OCI-LY7 (cell line): ENCODE measurements at regions of chr18 and their contacts with region 1.

Region 1: DNA sequence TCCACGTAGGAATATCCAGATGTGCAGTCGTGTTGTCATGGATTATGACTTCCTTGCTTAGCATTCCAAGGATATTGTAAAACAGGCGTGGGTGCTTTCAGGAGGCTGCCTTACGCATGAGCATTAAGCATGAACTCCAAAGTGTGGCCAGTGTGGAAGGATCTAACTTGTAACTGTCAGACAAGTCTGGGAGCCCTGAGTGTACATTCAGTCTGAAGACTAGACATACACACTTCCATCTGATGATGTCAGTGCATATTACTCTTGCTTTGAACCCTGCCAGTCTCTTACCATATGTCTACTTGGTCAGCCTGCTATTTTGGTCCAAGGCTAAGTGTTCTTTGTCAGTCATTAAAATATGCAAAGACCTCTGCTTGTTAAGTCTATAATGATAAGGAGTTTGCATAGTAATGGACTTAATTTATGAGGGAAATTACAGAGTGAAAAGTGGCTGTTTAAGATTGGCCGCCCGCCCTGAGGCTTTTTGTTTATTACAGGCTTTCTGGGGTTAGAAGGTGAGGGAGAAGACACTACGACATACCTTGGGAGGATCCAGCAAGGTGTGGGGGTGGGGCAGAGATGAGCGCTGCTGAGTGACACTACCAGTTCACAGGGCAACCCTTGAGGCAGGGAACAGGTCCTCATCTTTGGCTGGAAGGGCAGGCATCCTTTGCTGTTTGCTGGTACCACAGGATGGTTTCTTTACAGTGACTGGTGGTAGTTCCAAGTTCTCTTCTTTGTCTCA is 48.3 kb downstream of the CABLES1 start:
- DNase-seq: no peak
- H3K4me3 ChIP-seq: no peak overlapping the region
- H3K27ac ChIP-seq: no peak overlapping the region
- H3K4me1 ChIP-seq: peaks cover 56% of the 10 kb centered on the region
- CTCF ChIP-seq: no peak

Region 2: DNA sequence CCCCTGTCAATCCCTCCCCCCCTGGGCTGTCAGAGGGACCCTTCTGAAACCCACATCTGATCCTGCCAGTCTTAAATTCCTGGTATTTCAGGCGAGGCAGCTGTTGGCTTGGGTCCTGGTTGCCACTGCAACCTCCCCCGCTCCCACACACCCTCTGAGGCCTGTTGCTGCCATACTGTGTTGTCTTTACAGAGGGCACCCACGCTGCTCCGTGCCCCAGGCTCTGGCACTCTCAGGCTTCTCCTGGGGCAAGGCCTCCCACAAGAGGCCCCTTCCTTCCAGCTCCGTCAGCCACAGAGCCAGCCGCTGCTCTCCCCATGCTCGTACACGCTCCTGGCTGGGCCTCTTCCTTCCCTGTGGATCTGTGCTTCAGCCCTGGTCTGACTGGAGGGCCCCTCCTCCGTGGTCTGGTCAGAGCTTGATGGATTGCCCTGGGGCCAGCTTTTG is 39.7 kb before region 1 on chr18:
- CTCF ChIA-PET with region 1: no interaction called
- POLR2A ChIA-PET with region 1: interaction called, 5 read pairs
- intact Hi-C with region 1: loop called (anchors 2 kb)
- DNase-seq: no peak
- H3K4me3 ChIP-seq: no peak overlapping the region
- H3K27ac ChIP-seq: no peak overlapping the region
- H3K4me1 ChIP-seq: peaks cover 47% of the 10 kb centered on the region
- CTCF ChIP-seq: no peak

Region 3: GRCh38 chr18:23231340-23232021 is 47.9 kb after region 1 on chr18:
- CTCF ChIA-PET with region 1: no interaction called
- POLR2A ChIA-PET with region 1: interaction called, 14 read pairs
- intact Hi-C with region 1: no loop called
- DNase-seq: peak; percentile 92
- H3K4me3 ChIP-seq: peak overlapping the region; percentile 5
- H3K27ac ChIP-seq: peak overlapping the region; percentile 100
- H3K4me1 ChIP-seq: peaks cover 80% of the 10 kb centered on the region
- CTCF ChIP-seq: no peak